MCF 10A (cell line): ENCODE measurements at regions of chr3 and their contacts with region 1.

Region 1: GRCh38 chr3:136752422-136753325 is 496 bp upstream of the STAG1 start:
- DNase-seq: peak; percentile 97
- H3K4me3 Mint-ChIP-seq: peak overlapping the region; percentile 79
- H3K27ac Mint-ChIP-seq: peak overlapping the region; percentile 97
- H3K4me1 Mint-ChIP-seq: peaks cover 17% of the 10 kb centered on the region
- H3K27me3 Mint-ChIP-seq: no peaks in the 10 kb centered on the region
- CTCF ChIP-seq: peak; percentile 6

Region 2: GRCh38 chr3:136250226-136250902 is 502.3 kb before region 1 on chr3 and contains the start of gene PCCB:
- CTCF ChIA-PET with region 1: interaction called, 9 read pairs
- POLR2A ChIA-PET with region 1: interaction called, 8 read pairs
- intact Hi-C with region 1: loop called (anchors 1 kb)
- DNase-seq: peak; percentile 94
- H3K4me3 Mint-ChIP-seq: peak within 1 kb of the TSS; percentile 81
- H3K27ac Mint-ChIP-seq: peak within 1 kb of the TSS; percentile 67
- H3K4me1 Mint-ChIP-seq: peaks cover 17% of the 10 kb centered on the region
- H3K27me3 Mint-ChIP-seq: no peaks in the 10 kb centered on the region
- CTCF ChIP-seq: peak; percentile 65
- total RNA-seq, gene PCCB: 51.7 and 54.0 TPM in 2 replicates

Region 3: DNA sequence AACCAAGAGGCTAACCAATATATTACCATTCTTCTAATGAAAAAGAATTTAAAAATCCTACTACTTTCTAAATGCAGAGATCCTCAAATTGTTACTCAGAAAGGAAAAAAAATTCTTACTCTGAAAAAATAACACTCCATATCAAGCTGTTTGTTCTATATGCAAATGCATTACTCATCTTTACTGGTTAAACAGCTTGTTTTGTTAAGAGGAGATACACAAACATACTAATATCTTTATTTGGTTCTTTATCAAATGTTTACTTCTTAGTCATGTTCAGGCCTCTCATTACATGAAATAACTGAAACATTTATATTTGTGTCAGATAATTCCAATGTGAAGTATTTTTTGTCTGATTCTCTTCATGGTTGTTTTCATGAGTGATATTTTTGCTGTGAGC is 355.8 kb before region 1 on chr3:
- CTCF ChIA-PET with region 1: interaction called, 60 read pairs
- POLR2A ChIA-PET with region 1: interaction called, 28 read pairs
- intact Hi-C with region 1: no loop called
- DNase-seq: no peak
- H3K4me3 Mint-ChIP-seq: no peak overlapping the region
- H3K27ac Mint-ChIP-seq: peak overlapping the region; percentile 7
- H3K4me1 Mint-ChIP-seq: no peaks in the 10 kb centered on the region
- H3K27me3 Mint-ChIP-seq: no peaks in the 10 kb centered on the region
- CTCF ChIP-seq: no peak

Region 4: GRCh38 chr3:136772709-136773108 is 20.0 kb after region 1 on chr3:
- CTCF ChIA-PET with region 1: interaction called, 17 read pairs
- POLR2A ChIA-PET with region 1: no interaction called
- intact Hi-C with region 1: no loop called
- DNase-seq: peak; percentile 43
- H3K4me3 Mint-ChIP-seq: no peak overlapping the region
- H3K27ac Mint-ChIP-seq: no peak overlapping the region
- H3K4me1 Mint-ChIP-seq: no peaks in the 10 kb centered on the region
- H3K27me3 Mint-ChIP-seq: no peaks in the 10 kb centered on the region
- CTCF ChIP-seq: no peak

Region 5: DNA sequence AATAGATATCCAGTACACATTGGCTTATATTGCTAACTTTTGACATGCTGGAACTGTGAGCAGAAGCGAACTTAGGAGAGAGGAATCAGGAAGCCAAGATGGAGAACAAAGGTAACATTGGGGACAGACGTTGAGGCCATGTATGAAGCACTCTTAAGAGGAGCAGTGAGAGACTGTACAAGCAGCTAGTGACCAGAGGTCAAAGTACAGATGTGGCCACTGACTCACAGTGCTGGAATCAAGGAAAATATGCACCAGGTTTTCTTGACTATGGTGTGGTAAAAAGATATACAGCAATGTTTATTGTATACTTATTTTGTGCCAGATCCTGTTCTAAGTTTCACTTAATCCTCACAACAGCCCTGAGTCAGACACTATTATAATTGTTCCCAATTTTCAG is 203.1 kb after region 1 on chr3:
- CTCF ChIA-PET with region 1: interaction called, 44 read pairs
- POLR2A ChIA-PET with region 1: interaction called, 79 read pairs
- intact Hi-C with region 1: loop called (anchors 5 kb)
- DNase-seq: peak; percentile 63
- H3K4me3 Mint-ChIP-seq: no peak overlapping the region
- H3K27ac Mint-ChIP-seq: peak overlapping the region; percentile 75
- H3K4me1 Mint-ChIP-seq: peaks cover 58% of the 10 kb centered on the region
- H3K27me3 Mint-ChIP-seq: no peaks in the 10 kb centered on the region
- CTCF ChIP-seq: no peak

Region 6: DNA sequence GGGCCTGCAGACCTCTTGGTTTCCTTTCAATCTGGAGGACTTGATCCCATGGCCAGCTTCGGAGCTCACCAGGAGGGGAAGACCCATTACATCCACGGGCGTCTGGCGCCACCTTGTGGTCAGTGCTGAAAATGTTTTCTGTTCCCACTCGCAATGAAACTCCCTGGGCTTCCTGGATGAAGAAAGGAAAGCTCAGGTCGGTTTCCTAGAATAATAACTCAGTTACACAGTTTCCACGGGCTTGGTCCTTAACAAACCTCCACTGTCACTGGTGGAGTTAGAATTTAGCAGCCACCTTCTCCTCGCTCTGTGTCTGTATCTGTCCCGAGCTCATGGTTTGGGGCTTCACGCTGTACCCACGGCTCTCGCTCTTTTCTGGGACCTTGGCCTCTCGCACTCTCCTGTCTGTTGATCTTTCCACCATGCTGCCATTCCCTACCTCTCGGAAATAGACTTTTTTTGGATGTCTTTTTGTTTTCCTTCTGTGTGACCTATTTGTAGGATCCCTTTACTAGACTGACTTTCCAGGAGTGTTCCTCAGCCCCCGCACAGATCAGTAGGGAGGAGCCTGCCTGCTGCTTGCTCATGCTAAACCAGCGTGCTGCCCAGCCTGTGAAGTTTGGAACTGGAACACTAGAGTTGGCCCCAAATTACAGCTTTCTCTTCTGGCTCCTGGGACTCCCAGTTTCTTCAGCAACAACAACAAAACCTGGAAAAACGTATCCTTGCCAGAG is 261.4 kb after region 1 on chr3:
- CTCF ChIA-PET with region 1: interaction called, 40 read pairs
- POLR2A ChIA-PET with region 1: interaction called, 34 read pairs
- intact Hi-C with region 1: loop called (anchors 1 kb)
- DNase-seq: peak; percentile 90
- H3K4me3 Mint-ChIP-seq: no peak overlapping the region
- H3K27ac Mint-ChIP-seq: peak overlapping the region; percentile 46
- H3K4me1 Mint-ChIP-seq: peaks cover 29% of the 10 kb centered on the region
- H3K27me3 Mint-ChIP-seq: no peaks in the 10 kb centered on the region
- CTCF ChIP-seq: peak; percentile 77